ENCODE measurements at regions of chr13 and their contacts with region 1.

Region 1: DNA sequence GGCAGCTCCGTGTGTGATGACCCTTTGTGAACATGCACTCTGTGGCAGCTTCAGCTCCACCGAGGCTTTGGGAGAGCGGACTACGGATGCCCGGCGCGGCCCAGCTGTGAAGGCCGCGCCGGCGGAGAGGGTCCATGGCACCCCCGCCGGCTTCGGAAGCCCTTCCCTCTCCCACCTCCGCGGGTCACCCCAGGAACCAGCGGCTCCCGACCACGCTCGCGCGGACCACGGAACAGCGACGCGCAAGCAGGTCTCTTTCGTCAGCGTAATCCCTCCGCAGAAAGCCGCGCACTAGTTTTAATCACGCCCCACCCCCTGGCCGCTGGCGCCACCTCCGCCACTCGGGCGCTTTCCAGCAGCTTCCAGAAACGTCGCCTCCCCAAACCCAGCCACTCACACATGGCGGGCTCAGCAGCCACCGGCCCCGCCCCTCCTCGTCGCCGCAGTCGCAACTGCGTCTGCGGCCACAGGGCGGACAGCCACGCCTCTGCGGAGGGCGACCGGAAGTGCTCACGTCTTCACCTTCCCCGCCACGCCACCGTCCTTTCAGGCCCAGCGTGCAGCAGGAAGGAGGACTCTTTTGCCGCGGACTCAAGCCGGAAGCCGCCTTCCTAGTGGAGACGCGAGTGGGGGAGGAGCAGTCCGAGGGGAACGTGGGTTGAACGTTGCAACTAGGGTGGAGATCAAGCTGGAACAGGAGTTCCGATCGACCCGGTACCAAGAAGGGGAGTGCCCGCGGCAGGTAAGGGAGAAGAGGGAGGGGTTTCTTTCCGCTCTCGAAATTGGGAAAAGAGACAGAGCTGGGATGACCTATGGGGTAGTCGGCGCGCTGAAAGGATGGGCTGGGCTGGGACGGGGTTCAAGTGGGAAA is at the start of gene USPL1:
- DNase-seq: peak; percentile 99
- ATAC-seq: peak; percentile 88
- H3K4me3 Mint-ChIP-seq: no peak within 1 kb of the TSS
- H3K27ac Mint-ChIP-seq: no peak within 1 kb of the TSS
- H3K4me1 Mint-ChIP-seq: peaks cover 13% of the 10 kb centered on the region
- H3K27me3 Mint-ChIP-seq: no peaks in the 10 kb centered on the region
- total RNA-seq, gene USPL1: 23.9 to 25.8 TPM

Region 2: DNA sequence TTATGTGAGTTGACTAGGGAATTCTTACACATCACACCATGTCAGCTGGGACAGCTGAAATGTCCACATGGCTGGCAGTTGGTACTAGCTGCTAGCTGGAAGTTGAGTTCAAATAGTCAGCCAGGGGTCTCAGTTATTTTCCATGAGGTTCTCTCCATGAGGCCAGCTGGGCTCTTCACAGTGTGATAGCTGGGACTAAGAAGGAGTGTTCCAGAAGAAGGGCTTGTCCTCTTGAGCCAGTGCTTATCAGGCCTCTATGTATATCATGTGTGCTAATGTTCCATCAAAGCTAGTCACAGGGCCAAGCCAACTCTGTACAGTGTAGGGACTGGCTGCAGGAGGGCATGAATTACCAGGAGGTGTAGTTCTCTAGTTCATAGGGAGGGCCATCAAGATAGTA is 12.0 kb after region 1 on chr13:
- POLR2A ChIA-PET with region 1: interaction called, 59 read pairs
- DNase-seq: no peak
- ATAC-seq: no peak
- H3K4me3 Mint-ChIP-seq: no peak overlapping the region
- H3K27ac Mint-ChIP-seq: no peak overlapping the region
- H3K4me1 Mint-ChIP-seq: peaks cover 27% of the 10 kb centered on the region
- H3K27me3 Mint-ChIP-seq: no peaks in the 10 kb centered on the region

Region 3: GRCh38 chr13:30739761-30740642 is 122.5 kb after region 1 on chr13:
- POLR2A ChIA-PET with region 1: interaction called, 18 read pairs
- DNase-seq: peak; percentile 36
- ATAC-seq: peak; percentile 63
- H3K4me3 Mint-ChIP-seq: peak overlapping the region; percentile 78
- H3K27ac Mint-ChIP-seq: peak overlapping the region; percentile 89
- H3K4me1 Mint-ChIP-seq: peaks cover 61% of the 10 kb centered on the region
- H3K27me3 Mint-ChIP-seq: no peaks in the 10 kb centered on the region

Measured in activated naive CD8-positive, alpha-beta T cell treated with anti-CD3 and anti-CD28 coated beads, Interleukin-2, amount 10 ng/mL, durations not matched to agents 7 days and 5 days (primary cell).